ENCODE measurements at regions of chr1 and their contacts with region 1.

Region 1: DNA sequence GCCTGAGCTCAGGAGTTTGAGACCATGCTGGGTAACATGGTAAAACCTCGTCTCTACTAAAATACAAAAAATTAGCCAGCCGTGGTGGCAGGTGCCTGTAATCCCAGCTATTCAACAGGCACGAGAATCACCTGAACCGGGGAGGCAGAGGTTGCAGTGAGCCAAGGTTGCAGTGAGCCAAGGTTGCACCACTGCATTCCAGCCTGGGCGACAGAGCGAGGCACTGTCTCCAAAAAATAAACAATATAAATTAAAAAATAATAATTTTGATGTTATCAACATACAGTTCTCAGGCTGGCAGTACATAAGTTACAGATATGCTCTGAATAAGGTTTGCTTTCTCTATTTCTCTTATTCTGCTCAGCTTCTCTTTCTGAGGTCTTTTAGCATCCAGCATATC is 27.6 kb downstream of the GON4L start:
- DNase-seq: no peak
- ATAC-seq: no peak
- H3K4me3 ChIP-seq: no peak overlapping the region
- H3K27ac ChIP-seq: no peak overlapping the region
- H3K4me1 ChIP-seq: peaks cover 2% of the 10 kb centered on the region
- H3K27me3 ChIP-seq: no peaks in the 10 kb centered on the region
- CTCF ChIP-seq: no peak

Region 2: DNA sequence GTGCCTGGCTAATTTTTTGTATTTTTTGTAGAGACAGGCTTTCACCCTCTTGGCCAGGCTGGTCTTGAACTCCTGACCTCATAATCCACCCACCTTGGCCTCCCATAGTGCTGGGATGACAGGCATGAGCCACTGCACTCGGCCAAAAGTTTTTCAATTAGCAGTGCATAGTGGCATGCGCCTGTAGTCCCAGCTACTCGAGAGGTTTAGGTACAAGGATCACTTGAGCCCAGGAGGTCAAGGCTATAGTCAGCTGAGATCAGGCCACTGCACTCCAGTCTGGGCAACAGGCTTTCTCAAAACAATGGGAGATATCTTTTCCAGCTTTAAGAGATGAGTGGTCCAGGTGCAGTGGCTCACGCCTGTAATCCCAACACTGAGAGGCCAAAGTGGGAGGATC is 109.7 kb before region 1 on chr1:
- CTCF ChIA-PET with region 1: no interaction called
- POLR2A ChIA-PET with region 1: interaction called, 10 read pairs
- in situ Hi-C with region 1: no loop called
- intact Hi-C with region 1: no loop called
- DNase-seq: no peak
- ATAC-seq: no peak
- H3K4me3 ChIP-seq: no peak overlapping the region
- H3K27ac ChIP-seq: no peak overlapping the region
- H3K4me1 ChIP-seq: no peaks in the 10 kb centered on the region
- H3K27me3 ChIP-seq: no peaks in the 10 kb centered on the region
- CTCF ChIP-seq: no peak

Region 3: GRCh38 chr1:155816351-155816750 is 13.0 kb before region 1 on chr1:
- CTCF ChIA-PET with region 1: no interaction called
- POLR2A ChIA-PET with region 1: no interaction called
- in situ Hi-C with region 1: no loop called
- intact Hi-C with region 1: no loop called
- DNase-seq: no peak
- ATAC-seq: no peak
- H3K4me3 ChIP-seq: no peak overlapping the region
- H3K27ac ChIP-seq: no peak overlapping the region
- H3K4me1 ChIP-seq: no peaks in the 10 kb centered on the region
- H3K27me3 ChIP-seq: no peaks in the 10 kb centered on the region
- CTCF ChIP-seq: no peak

Region 4: GRCh38 chr1:155873860-155874259 is 44.5 kb after region 1 on chr1:
- CTCF ChIA-PET with region 1: no interaction called
- POLR2A ChIA-PET with region 1: no interaction called
- in situ Hi-C with region 1: no loop called
- intact Hi-C with region 1: no loop called
- DNase-seq: no peak
- ATAC-seq: no peak
- H3K4me3 ChIP-seq: no peak overlapping the region
- H3K27ac ChIP-seq: no peak overlapping the region
- H3K4me1 ChIP-seq: no peaks in the 10 kb centered on the region
- H3K27me3 ChIP-seq: no peaks in the 10 kb centered on the region
- CTCF ChIP-seq: no peak

Region 5: GRCh38 chr1:155989242-155990004 is 160.0 kb after region 1 on chr1:
- CTCF ChIA-PET with region 1: no interaction called
- POLR2A ChIA-PET with region 1: no interaction called
- in situ Hi-C with region 1: no loop called
- intact Hi-C with region 1: no loop called
- DNase-seq: peak; percentile 74
- ATAC-seq: peak; percentile 91
- H3K4me3 ChIP-seq: no peak overlapping the region
- H3K27ac ChIP-seq: peak overlapping the region; percentile 46; the same call in 1 of the 2 replicates
- H3K4me1 ChIP-seq: peaks cover 2% of the 10 kb centered on the region; the same call in 1 of the 2 replicates
- H3K27me3 ChIP-seq: no peaks in the 10 kb centered on the region
- CTCF ChIP-seq: peak; percentile 97

Region 6: GRCh38 chr1:156656806-156657740 is 827.7 kb after region 1 on chr1:
- CTCF ChIA-PET with region 1: no interaction called
- POLR2A ChIA-PET with region 1: no interaction called
- in situ Hi-C with region 1: no loop called
- intact Hi-C with region 1: no loop called
- DNase-seq: no peak
- ATAC-seq: peak; percentile 53
- H3K4me3 ChIP-seq: peak overlapping the region in 1 of 2 experiments; percentile 17; a peak in 2 of 4 replicates
- H3K27ac ChIP-seq: no peak overlapping the region; the same call in 1 of the 2 replicates
- H3K4me1 ChIP-seq: peaks cover 32% of the 10 kb centered on the region
- H3K27me3 ChIP-seq: no peaks in the 10 kb centered on the region
- CTCF ChIP-seq: peak; percentile 98